Heart right ventricle (tissue), 16 donors: ENCODE measurements at regions of chr3 and their contacts with region 1.

Region 1: GRCh38 chr3:67113802-67114407 is 115.8 kb downstream of the KBTBD8 start:
- DNase-seq: peak; percentile 45 to 70
- ATAC-seq: peak in 5 of 8 donors; percentile 61 to 84 (median 72)
- H3K4me3 ChIP-seq: no peak overlapping the region
- H3K27ac ChIP-seq: no peak overlapping the region
- H3K4me1 ChIP-seq: peaks cover 0 to 4% (median 0%) of the 10 kb centered on the region in 9 donors
- H3K27me3 ChIP-seq: peaks cover 0 to 9% (median 0%) of the 10 kb centered on the region in 7 donors
- CTCF ChIP-seq: peak; percentile 52 to 94 (median 85)

Region 2: DNA sequence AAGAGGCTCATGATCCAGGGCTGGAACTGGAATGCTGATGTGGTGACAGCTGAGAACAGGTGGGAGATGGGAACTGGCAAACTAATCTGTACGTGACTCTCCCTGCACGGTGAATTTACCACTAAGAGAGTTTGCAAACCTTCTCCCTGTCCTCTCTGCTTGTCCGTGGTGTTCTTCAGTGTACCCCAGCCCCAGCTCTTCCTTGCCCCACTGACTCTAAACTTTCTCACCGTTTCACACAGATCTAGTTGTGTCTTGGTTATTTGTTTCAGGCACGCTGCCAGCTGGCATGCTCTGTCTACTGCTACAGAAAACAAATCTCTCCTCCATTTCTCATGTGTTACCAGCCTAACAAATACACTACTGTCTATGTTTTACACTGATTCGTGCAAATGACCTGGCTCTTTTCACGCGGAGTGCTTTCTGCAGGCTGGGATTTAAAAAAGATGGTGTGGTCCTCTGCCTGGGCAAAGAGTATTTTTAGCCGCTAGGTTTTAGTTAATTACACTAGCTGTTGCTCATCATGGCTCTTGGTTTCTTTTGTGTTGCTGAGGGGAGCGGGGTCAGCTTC is 420.4 kb before region 1 on chr3:
- intact Hi-C with region 1: no loop called
- DNase-seq: peak; percentile 6 to 18
- ATAC-seq: peak in 2 of 8 donors; percentile 24 to 40
- H3K4me3 ChIP-seq: peak overlapping the region in 2 of 10 donors; percentile 18 to 22
- H3K27ac ChIP-seq: no peak overlapping the region
- H3K4me1 ChIP-seq: peaks cover 0 to 12% (median 6%) of the 10 kb centered on the region in 9 donors
- H3K27me3 ChIP-seq: peaks cover 0 to 5% (median 0%) of the 10 kb centered on the region in 7 donors
- CTCF ChIP-seq: no peak

Region 3: DNA sequence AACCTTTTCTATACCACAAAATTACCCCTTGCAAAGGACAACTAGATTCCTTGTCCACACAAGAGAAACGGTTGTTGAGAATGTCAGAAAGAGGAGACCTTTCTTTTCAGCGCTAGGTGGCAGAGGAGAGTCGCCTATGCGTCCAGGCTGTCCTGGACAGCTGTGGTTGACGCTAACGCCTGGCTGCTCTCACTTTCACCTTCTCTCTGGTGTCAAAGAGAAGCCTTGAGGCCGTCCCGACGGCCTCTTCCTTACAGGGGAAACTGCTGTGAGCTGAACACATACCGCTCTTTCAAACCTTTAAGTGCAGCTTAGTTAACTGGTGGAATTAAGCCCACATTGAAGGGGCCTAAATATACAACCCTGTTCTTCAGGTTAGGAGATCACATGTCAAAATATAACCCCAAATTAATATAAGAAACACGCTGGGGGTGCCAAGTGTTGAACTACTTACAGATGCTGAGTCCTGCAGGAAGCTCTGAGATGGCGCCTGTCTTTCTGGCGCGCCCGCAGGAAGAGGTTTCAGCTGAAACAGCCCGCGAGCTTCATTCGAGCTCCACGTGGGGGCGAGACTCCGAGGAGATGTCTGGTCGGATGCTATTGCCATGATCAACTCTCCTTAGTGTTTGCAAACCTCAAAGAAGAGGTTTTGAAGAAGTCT is 141.9 kb before region 1 on chr3:
- intact Hi-C with region 1: loop called in 1 of 10 experiments (anchors 10 kb)
- DNase-seq: peak; percentile 58 to 76
- ATAC-seq: peak; percentile 92 to 99 (median 96)
- H3K4me3 ChIP-seq: peak overlapping the region in 9 of 10 donors; percentile 12 to 52 (median 42)
- H3K27ac ChIP-seq: peak overlapping the region in 4 of 10 donors; percentile 2 to 55 (median 28)
- H3K4me1 ChIP-seq: peaks cover 0 to 13% (median 6%) of the 10 kb centered on the region in 9 donors
- H3K27me3 ChIP-seq: peaks cover 0 to 14% (median 7%) of the 10 kb centered on the region in 7 donors
- CTCF ChIP-seq: peak; percentile 66 to 91 (median 86)

Region 4: DNA sequence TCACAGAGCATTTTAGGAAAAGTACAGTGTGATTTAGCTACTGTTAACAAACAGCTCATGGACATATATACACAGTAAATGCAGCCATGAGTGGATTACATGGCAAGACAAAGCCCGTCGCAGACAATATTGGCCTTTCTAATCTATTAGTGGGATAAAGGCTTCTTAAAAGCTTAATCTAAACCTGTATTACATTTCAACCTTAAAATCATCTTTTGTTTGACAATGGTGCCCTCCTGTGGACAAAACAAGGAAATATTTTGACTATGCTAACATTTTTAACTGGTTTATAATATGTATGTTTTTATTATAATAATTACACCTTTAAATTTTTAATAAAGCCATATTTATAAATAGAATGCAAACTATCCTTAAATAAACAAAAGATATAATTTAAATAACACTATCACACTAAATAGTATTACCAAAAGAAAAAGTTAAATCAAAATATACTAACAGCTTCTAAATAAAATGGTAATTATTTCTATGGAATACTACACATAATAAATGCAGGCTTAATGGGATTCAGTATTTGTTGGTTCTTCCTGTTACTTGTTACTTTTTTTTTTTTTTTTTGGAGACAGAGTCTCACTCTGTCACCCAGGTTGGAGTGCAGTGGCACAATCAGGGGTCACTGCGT is 1779.8 kb after region 1 on chr3:
- intact Hi-C with region 1: loop called in 2 of 10 experiments (anchors 5 to 10 kb)
- DNase-seq: no peak
- ATAC-seq: no peak
- H3K4me3 ChIP-seq: no peak overlapping the region
- H3K27ac ChIP-seq: no peak overlapping the region
- H3K4me1 ChIP-seq: no peaks in the 10 kb centered on the region
- H3K27me3 ChIP-seq: peaks cover 0 to 36% (median 11%) of the 10 kb centered on the region in 7 donors
- CTCF ChIP-seq: peak; percentile 9 to 67 (median 57)